Activated T-helper 1 cell treated with anti-CD3 and anti-CD28 coated beads, Interleukin-12 subunit alpha, Interleukin-12 subunit beta, Interleukin-2, Interleukin-4 antibody, amounts not matched to agents 30 ng/mL and 10 ng/mL and 1 ng/mL, durations not matched to agents 14 hours and 24 hours and 36 hours (primary cell): ENCODE measurements at regions of chrX and their contacts with region 1.

Region 1: DNA sequence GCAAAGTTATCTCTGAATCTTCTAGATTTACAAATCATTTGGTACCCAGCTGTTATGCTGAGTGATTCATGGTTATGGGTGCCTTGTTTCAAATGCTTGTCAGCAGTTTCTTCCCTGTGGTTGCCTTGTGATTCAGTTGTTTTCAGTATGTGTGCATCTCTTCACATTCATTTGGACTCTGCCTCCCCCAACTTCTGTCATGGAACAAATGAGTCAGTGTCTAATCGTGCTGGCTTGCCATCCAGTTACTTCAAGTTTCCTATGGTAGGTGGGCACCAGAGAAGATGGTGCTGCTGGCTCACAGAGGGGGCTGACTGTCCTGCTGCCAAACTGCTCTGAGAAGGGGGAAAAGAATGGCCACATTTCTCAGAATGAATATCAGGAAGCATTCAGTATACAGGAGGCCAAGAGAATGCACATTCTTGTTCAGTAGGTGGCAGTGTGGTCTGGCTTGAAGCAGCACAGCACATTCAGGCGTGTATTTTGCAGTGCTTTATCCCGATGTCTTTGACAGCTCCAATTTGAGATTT is 260.9 kb downstream of the GLUD2 start:
- DNase-seq: peak; percentile 30
- H3K4me3 Mint-ChIP-seq: peak overlapping the region; percentile 47
- H3K27ac Mint-ChIP-seq: peak overlapping the region; percentile 97
- H3K4me1 Mint-ChIP-seq: peaks cover 24% of the 10 kb centered on the region
- H3K27me3 Mint-ChIP-seq: no peaks in the 10 kb centered on the region

Region 2: DNA sequence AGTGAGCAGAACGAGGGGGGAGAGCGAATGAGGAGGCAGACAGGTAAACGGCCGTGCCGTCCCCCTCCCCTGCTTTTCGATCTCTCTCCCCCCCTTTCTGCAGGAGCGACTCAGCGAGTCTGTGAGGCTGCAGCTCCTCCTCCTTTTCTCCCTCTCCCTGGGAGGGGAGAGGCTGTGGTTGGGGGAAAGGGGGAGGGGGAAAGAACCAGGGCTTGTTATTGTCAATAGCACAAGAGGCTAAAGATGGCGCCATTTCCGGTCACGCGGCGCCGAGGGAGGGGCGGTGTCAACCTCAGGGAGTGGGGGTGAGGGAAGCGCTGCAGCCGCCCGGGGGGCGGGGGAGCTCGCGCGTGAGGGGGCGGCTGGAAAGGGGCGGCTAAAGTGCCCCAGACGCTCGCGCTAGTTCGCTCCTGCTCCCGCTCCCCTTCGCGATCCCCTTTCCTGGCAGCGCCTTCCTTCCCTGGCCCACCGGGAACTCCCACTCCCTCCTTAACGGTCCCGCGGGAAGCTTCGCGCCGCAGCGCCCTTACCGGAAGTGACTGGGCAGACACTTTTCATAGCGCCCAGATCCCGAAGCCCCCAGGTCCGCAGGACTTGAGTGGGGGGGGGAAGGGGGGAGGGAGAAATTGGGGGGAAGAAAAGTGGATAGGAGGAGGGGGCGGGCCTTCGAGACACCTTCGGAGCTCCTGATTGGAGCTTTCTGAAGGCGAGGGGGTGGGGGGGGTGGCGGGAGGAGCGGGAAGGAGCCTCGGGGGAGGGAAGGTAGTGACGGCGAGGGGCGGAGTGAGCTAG is 747.3 kb before region 1 on chrX and contains the start of gene CUL4B:
- intact Hi-C with region 1: loop called (anchors 5 kb)
- DNase-seq: peak; percentile 89
- H3K4me3 Mint-ChIP-seq: peak within 1 kb of the TSS; percentile 99
- H3K27ac Mint-ChIP-seq: peak within 1 kb of the TSS; percentile 97
- H3K4me1 Mint-ChIP-seq: peaks cover 30% of the 10 kb centered on the region
- H3K27me3 Mint-ChIP-seq: no peaks in the 10 kb centered on the region
- total RNA-seq, gene CUL4B: 25.2 and 26.5 TPM in 2 replicates

Region 3: GRCh38 chrX:120697053-120697452 is 611.3 kb before region 1 on chrX:
- intact Hi-C with region 1: loop called (anchors 2 kb)
- DNase-seq: peak; percentile 62
- H3K4me3 Mint-ChIP-seq: peak overlapping the region; percentile 38
- H3K27ac Mint-ChIP-seq: peak overlapping the region; percentile 93
- H3K4me1 Mint-ChIP-seq: peaks cover 21% of the 10 kb centered on the region
- H3K27me3 Mint-ChIP-seq: no peaks in the 10 kb centered on the region

Region 4: GRCh38 chrX:121160987-121161386 is 147.4 kb before region 1 on chrX:
- intact Hi-C with region 1: loop called (anchors 1 kb)
- DNase-seq: no peak
- H3K4me3 Mint-ChIP-seq: peak overlapping the region; percentile 54
- H3K27ac Mint-ChIP-seq: peak overlapping the region; percentile 86
- H3K4me1 Mint-ChIP-seq: peaks cover 35% of the 10 kb centered on the region
- H3K27me3 Mint-ChIP-seq: peaks cover 2% of the 10 kb centered on the region

Region 5: DNA sequence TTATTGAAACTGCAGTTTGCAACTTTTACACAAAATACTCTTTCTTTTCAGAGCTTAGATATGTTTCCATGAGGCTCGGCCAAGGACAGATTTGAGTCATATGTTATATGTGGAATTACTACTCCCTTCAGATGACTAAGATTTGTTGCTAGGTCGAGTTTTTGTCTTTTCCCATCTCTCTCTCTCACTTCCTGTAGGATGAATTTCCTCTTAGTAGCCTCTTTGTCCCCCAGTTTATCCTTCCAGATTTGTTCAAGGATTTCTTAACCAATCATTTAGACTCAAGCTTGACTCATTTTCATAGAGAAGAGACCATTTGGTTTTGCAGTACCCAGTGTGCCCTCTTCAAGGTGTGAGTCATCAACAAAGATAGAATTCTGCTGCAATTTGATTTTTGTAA is 51.7 kb before region 1 on chrX:
- intact Hi-C with region 1: loop called (anchors 1 kb)
- DNase-seq: no peak
- H3K4me3 Mint-ChIP-seq: no peak overlapping the region
- H3K27ac Mint-ChIP-seq: no peak overlapping the region
- H3K4me1 Mint-ChIP-seq: no peaks in the 10 kb centered on the region
- H3K27me3 Mint-ChIP-seq: no peaks in the 10 kb centered on the region

Region 6: DNA sequence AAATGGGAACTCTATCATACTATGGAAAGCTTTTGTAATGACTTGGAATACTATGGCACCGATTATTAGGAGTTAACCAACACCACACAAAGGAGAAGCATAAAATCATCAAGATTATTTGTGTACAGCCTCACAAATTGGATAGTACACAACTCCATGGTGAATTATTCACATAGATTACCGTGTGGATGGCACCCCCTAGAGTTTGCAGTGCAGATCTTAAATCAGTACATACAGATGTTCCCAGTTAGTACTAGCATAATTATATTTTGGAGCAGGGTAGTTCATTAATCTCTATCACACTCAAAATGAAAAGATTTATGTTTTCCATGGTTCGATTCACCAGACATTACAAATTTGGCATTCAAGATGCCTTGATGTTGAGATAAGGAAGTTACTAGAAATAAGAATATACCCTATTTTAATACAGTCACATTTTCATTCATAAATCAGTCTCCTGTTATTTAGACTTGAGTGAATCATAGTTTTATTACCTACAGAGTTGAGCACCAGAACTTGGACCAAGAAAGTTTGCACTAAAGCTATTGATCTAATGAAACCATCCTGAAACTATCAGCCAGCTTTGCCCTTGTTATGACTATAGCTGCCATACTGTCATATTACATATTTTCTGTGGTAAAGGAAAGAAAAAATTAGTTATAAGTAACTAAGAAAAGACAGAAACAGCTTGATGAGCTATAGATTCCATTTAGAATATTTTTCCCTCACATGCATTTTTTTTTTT is 270.8 kb after region 1 on chrX:
- intact Hi-C with region 1: loop called (anchors 1 kb)
- DNase-seq: no peak
- H3K4me3 Mint-ChIP-seq: no peak overlapping the region
- H3K27ac Mint-ChIP-seq: peak overlapping the region; percentile 61
- H3K4me1 Mint-ChIP-seq: no peaks in the 10 kb centered on the region
- H3K27me3 Mint-ChIP-seq: no peaks in the 10 kb centered on the region

Region 7: GRCh38 chrX:121851033-121851432 is 542.7 kb after region 1 on chrX:
- intact Hi-C with region 1: no loop called
- DNase-seq: no peak
- H3K4me3 Mint-ChIP-seq: no peak overlapping the region
- H3K27ac Mint-ChIP-seq: no peak overlapping the region
- H3K4me1 Mint-ChIP-seq: no peaks in the 10 kb centered on the region
- H3K27me3 Mint-ChIP-seq: no peaks in the 10 kb centered on the region